ENCODE measurements at regions of chr17 and their contacts with region 1.

Region 1: DNA sequence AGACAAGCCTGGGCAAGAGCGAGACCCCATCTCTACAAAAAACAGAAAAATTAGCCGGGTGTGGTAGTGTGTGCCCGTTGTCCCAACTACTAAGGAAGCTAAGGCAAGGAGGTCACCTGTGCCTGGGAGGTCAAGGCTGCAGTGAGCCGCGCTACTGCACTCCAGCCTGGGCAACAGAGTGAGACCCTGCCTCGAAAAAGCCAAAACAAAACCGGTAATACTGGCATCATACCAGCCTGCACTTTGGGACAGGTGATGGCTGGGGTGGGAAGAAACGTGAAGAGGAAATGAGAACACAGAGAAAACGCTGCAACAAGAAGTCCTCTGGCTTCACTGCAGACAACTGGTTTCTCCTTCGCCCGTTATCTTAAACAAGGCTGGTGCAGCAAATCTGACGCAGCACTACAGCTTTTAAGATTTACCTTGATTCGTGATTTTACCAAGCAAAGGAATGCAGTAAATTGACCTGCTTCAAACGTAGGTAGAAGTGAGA is 725 bp upstream of the CASC3 start:
- DNase-seq: peak in 14 of 42 donors; percentile 6 to 46 (median 22)

Region 2: DNA sequence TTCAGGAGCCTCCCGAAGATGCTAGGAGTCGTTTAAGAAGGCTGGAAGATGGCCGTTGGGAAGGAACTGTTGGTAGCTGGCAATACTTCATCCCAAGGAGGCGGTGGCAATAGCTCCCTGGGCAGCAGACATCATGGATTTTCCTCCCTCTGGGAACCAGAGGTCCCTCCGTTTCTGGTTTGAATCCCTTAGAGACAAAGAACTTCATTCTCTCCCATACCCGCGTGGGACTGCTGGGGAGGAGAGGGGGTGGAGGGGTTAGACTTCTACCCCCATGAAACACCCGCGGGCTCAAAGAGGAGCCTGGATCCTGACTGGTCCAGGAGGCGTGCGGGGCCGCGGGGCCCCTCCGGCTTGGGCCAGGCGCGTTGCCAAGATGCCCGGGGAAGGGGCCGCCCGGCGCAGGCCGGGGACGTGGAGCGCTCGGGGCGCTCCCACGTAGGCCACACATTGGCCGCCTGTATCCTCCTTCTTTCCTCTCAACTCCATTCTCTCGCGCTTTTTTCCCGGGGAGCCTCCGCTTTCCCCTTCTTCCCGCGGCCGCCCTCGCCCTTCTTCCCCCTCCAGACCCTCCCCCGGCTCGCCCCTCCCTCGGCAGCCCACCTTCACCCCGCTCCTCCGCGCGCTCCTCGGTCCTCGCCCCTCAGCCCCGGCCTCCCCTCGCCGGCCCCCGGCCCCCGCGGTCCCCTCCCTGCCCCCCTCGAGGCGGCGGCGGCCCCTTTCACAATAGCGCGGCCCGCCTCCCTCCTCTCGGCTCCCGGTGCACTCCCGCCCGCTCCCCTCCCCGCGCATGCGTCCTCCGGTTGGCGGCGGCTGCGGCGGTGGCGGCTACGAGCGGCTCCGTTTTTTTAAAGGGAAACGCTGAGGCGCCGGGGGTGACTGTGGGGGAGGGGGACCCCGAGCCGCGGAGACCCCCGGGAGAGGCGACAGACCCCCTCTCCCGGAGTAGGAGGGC is 18.2 kb before region 1 on chr17 and contains the start of gene MSL1:
- intact Hi-C with region 1: loop called (anchors 1 kb)
- DNase-seq: peak; percentile 66 to 96 (median 92)